BJ (cell line): ENCODE measurements at regions of chr11 and their contacts with region 1.

Region 1: GRCh38 chr11:117426269-117426685 is 98.6 kb downstream of the CEP164 start:
- DNase-seq: no peak
- H3K4me3 ChIP-seq: no peak overlapping the region
- H3K27me3 ChIP-seq: peaks cover 5% of the 10 kb centered on the region
- CTCF ChIP-seq: peak; percentile 99

Region 2: GRCh38 chr11:117316197-117316961 is 109.9 kb before region 1 on chr11 and contains the start of gene BACE1:
- CTCF ChIA-PET with region 1: no interaction called
- POLR2A ChIA-PET with region 1: no interaction called
- DNase-seq: peak; percentile 52
- H3K4me3 ChIP-seq: peak within 1 kb of the TSS; percentile 86
- H3K27me3 ChIP-seq: no peaks in the 10 kb centered on the region
- CTCF ChIP-seq: peak; percentile 75
- polyA plus RNA-seq, gene BACE1: 47.8 and 99.6 TPM in 2 replicates

Region 3: DNA sequence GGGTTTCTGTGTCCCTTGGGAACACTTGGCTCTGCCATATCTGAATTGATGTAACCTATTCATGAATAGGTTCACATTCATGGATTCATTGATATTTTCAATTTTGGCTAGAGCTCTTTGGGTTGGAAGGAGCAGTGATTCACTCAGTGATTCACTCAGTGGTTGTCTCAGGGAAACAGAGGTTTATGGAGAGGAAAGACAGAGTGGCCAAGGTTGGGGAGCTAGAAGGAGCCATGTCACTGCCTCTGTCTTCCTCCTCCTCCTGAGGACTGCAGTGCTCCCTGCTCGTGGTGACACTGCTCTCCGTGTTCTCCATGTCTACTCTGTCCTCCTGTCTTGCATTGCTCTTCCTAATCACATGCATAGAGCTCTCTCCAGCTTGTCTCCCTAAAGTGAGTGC is 81.2 kb before region 1 on chr11:
- CTCF ChIA-PET with region 1: no interaction called
- POLR2A ChIA-PET with region 1: no interaction called
- DNase-seq: no peak
- H3K4me3 ChIP-seq: no peak overlapping the region
- H3K27me3 ChIP-seq: no peaks in the 10 kb centered on the region
- CTCF ChIP-seq: no peak

Region 4: DNA sequence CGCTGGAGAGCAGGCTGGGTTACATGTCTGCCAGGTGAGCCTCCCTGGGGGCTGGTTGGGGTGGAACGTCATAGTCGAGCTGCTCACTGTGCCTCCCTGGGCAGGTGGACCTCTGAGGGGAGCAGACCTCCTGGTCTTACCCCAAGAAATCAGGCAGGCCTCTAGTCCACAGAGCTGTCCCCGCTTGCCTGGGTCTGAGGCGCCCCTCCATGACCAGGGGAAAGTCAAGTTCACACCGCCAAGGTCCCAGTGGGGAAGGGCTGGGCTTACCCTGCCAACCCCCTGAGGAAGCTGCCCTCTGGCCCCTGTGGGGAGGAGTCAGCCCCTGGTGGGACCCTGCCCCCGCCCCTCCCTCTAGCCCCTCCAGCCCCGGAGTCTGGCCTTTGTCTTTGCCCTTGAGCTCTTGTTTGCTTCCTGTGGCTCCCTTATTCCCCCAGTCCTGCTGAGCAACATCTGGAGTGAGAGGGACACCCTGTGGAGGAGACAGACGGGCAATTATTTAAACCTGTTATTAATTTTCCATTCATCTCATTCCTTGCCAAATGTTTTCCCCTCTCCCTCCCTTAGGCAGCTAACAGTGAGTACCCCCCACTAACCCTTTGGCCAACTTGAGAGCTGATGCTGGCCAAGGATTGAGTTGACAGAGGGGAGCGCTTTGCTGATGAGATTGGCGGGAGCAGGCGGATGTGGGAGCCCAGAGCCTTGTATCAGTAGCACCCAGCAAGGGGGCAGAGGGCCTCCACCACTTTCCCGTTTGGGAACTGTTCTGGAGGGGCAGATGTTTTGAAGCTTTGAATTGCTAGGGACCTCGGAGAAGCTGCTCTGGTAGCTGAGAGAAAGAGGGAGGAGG is 15.2 kb before region 1 on chr11:
- CTCF ChIA-PET with region 1: interaction called, 54 read pairs
- POLR2A ChIA-PET with region 1: no interaction called
- DNase-seq: no peak
- H3K4me3 ChIP-seq: no peak overlapping the region
- H3K27me3 ChIP-seq: no peaks in the 10 kb centered on the region
- CTCF ChIP-seq: no peak

Region 5: GRCh38 chr11:117443266-117444195 is 17.3 kb after region 1 on chr11:
- CTCF ChIA-PET with region 1: interaction called, 17 read pairs
- POLR2A ChIA-PET with region 1: no interaction called
- DNase-seq: no peak
- H3K4me3 ChIP-seq: no peak overlapping the region
- H3K27me3 ChIP-seq: peaks cover 19% of the 10 kb centered on the region
- CTCF ChIP-seq: peak; percentile 51

Region 6: GRCh38 chr11:117459781-117460261 is 33.5 kb after region 1 on chr11:
- CTCF ChIA-PET with region 1: interaction called, 10 read pairs
- POLR2A ChIA-PET with region 1: no interaction called
- DNase-seq: no peak
- H3K4me3 ChIP-seq: no peak overlapping the region
- H3K27me3 ChIP-seq: peaks cover under 1% of the 10 kb centered on the region
- CTCF ChIP-seq: no peak

Region 7: DNA sequence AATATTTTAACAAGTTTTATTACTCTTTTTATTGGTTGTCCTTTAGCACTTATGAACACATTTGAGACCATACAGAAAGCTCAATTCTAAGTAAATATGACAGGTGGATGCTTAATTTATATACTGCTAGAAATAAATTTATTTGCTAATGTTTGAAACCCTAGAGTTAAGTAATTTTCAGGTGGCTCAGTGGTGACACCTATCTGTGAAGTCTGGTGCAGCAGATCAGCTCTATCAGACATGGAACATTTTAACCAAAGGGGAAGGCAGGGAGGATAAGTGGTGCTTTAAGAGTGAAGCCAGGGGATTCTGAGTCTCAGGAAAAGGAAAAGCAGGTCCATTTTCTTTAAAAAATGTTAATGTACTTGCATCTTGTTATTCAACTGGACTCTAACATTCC is 194.9 kb after region 1 on chr11:
- CTCF ChIA-PET with region 1: interaction called, 22 read pairs
- POLR2A ChIA-PET with region 1: interaction called, 3 read pairs
- DNase-seq: no peak
- H3K4me3 ChIP-seq: no peak overlapping the region
- H3K27me3 ChIP-seq: peaks cover 2% of the 10 kb centered on the region; the same call in 1 of the 2 replicates
- CTCF ChIP-seq: peak; percentile 44

Region 8: DNA sequence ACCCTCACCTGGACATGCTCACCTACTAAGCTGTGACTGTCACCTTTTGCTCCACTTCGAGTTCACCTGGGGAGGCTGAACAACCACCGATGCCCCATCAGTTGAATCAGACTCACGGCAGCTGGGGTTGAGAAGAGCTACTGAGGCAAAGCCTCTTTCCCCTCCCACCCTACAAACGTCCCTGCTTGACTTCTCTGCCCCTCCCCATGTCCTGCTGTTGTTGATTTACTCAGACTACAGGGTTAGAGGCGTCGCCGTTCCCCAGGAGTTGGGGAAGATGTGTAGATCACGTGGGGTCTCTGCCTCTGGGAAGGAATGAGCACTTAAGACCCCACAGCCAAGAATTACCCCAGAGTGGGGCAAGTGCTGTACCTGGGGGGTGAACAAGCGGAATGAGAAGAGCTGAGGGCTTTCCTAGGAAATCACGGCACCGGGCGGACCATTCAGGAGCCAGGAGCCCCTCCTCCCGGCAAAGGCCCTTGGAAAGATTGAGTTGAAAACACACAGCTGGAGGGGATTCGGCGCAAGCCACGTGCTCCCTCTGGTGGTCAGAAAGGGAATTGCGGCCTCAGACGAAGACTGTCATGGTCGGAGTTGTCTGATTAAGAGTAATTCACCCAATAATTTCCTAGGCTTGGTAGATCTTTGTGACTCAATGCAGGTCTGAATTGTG is 391.2 kb after region 1 on chr11:
- CTCF ChIA-PET with region 1: interaction called, 52 read pairs
- POLR2A ChIA-PET with region 1: no interaction called
- DNase-seq: peak; percentile 4
- H3K4me3 ChIP-seq: no peak overlapping the region
- H3K27me3 ChIP-seq: no peaks in the 10 kb centered on the region
- CTCF ChIP-seq: peak; percentile 99

Region 9: DNA sequence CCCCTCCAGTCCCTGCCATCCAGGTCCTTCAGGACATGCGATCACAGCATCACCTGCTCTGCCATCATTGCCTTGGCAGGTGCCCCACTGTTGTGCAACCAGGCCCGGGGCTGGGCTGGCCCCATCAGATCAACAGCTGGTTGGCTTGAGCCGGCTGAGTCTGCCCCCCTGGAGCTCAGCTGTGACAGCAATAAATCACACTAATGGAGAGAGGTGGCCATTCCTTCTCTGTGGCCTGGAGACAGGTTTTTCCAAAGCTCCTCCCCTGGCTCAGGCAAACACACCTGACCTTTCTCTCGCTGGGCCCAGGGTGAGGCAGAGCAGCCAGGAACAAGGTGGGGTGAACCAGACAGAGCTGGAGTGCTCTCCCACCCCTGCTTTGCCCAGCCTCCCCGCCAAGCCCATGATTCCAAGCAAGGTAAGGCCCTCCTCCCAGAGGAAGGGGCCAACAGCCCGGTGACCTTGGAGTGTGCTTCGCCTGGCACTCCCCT is 407.2 kb after region 1 on chr11:
- CTCF ChIA-PET with region 1: no interaction called
- POLR2A ChIA-PET with region 1: no interaction called
- DNase-seq: no peak
- H3K4me3 ChIP-seq: no peak overlapping the region
- H3K27me3 ChIP-seq: peaks cover 2% of the 10 kb centered on the region
- CTCF ChIP-seq: no peak